Endothelial cell of umbilical vein (primary cell): ENCODE measurements at regions of chr2 and their contacts with region 1.

Region 1: GRCh38 chr2:25342372-25343186 is 854 bp upstream of the DNMT3A start:
- DNase-seq: peak; percentile 88
- H3K4me3 ChIP-seq: peak overlapping the region in 2 of 3 experiments; percentile 29 to 58
- H3K27ac ChIP-seq: no peak overlapping the region
- H3K4me1 ChIP-seq: no peaks in the 10 kb centered on the region
- H3K27me3 ChIP-seq: peaks cover 0 to 5% of the 10 kb centered on the region in 2 experiments
- CTCF ChIP-seq: peak; percentile 93 to 95
- POLR2A ChIP-seq: no peak

Region 2: GRCh38 chr2:24084386-24085361 is 1257.9 kb before region 1 on chr2 and contains the start of gene TP53I3:
- CTCF ChIA-PET with region 1: no interaction called
- POLR2A ChIA-PET with region 1: no interaction called
- dilution Hi-C with region 1: no loop called
- intact Hi-C with region 1: no loop called
- DNase-seq: peak; percentile 93
- H3K4me3 ChIP-seq: peak within 1 kb of the TSS; percentile 53 to 85 (median 73)
- H3K27ac ChIP-seq: peak within 1 kb of the TSS; percentile 66
- H3K4me1 ChIP-seq: peaks cover 16% of the 10 kb centered on the region
- H3K27me3 ChIP-seq: no peaks in the 10 kb centered on the region
- CTCF ChIP-seq: peak; percentile 92 to 99
- POLR2A ChIP-seq: peak; percentile 96
- total RNA-seq, gene TP53I3: 94.2 and 102 TPM in 2 replicates

Region 3: DNA sequence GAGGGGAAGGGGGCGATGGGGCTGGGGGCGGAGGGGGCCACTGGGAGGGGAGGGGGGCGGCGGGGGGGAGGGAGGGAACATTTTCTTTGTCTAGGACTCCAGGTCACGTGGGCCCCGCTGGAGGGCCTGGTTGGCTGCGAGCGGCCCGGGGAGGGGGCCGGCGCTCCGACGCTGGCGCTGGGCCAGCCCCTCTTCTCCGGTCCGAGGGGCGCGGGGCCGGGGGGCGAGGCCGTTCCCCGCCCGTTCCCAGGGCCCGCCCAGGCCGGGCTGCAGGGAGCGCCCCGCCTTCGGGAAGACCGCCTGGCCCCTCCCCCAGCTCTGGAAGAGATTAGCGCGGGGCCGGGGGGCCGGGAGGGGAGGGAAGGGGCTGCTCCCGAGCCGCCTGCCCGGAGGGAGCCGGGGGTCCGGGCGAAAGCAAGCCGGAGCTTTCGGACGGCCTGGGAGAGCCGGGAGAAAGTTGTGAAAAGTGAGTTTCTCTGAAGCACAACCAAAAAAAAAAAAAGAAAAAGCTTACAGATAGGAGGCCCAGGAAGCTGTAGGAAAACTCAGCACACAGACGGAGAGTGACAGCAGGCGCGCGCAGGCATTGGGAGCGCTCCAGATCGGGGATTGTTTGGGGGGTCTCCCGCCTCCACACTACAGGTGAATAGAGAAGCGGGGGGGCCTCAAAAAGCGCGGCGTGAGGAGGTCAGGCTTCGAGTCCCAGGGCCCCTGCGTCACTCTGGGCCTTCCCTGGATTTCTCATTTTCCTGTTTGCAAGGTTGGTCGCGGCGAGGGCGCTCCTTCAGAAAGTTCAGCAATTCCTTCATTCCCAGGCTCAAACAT is 90.1 kb before region 1 on chr2:
- CTCF ChIA-PET with region 1: no interaction called
- POLR2A ChIA-PET with region 1: no interaction called
- dilution Hi-C with region 1: no loop called
- intact Hi-C with region 1: loop called (anchors 1 kb)
- DNase-seq: peak; percentile 82
- H3K4me3 ChIP-seq: peak overlapping the region in 2 of 3 experiments; percentile 19 to 59
- H3K27ac ChIP-seq: peak overlapping the region; percentile 74
- H3K4me1 ChIP-seq: peaks cover 21% of the 10 kb centered on the region
- H3K27me3 ChIP-seq: no peaks in the 10 kb centered on the region
- CTCF ChIP-seq: no peak
- POLR2A ChIP-seq: no peak

Region 4: DNA sequence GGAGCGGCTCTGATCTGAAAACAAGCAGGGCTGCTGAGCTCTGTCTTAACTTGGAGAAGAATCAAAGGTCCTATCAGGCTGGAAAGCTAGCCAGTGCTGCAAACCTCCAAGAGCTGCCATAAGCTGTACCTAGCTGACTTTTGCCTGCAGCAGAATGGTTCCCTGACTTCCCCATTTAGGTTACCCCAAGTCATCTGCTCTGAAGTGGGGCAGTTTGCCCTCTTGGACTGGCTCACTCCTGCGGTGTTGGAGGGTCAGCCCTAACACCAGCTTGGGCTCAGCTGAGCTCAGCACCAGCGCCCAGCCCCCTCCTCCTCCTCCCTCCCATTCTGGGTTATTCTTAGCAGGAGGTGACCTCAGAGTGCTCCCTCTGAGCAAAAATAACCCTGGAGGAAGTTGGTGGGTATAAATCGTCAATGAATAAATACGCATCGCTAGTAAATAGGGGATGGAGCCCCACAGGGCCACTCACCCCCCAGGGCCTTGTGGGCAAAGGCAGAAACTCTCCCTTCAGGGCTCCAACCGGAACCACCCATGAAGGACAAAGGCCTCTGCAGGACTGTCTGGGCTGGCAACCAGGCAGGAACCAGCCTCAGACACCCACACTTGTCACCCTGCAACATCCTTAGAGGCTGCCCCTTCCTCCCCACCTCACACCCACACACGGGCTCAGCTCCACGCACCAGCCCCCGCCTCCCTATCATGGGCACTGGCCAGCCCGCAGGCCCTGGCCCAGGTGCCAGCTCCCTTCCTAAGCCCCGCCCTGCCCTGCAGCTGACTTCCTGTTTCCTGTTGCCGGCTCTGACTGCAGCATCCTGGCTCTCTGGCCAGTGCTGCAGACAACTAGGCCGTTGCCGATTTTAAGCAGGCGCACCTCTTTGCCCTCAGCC is 47.8 kb before region 1 on chr2:
- CTCF ChIA-PET with region 1: interaction called, 3 read pairs
- POLR2A ChIA-PET with region 1: no interaction called
- dilution Hi-C with region 1: no loop called
- intact Hi-C with region 1: loop called (anchors 5 kb)
- DNase-seq: peak; percentile 81
- H3K4me3 ChIP-seq: no peak overlapping the region
- H3K27ac ChIP-seq: peak overlapping the region; percentile 68
- H3K4me1 ChIP-seq: peaks cover 38% of the 10 kb centered on the region
- H3K27me3 ChIP-seq: no peaks in the 10 kb centered on the region
- CTCF ChIP-seq: no peak
- POLR2A ChIP-seq: peak; percentile 76

Region 5: GRCh38 chr2:25362049-25362433 is 19.5 kb after region 1 on chr2:
- CTCF ChIA-PET with region 1: interaction called, 55 read pairs
- POLR2A ChIA-PET with region 1: no interaction called
- dilution Hi-C with region 1: no loop called
- intact Hi-C with region 1: no loop called
- DNase-seq: peak; percentile 93
- H3K4me3 ChIP-seq: peak overlapping the region in 1 of 3 experiments; percentile 34
- H3K27ac ChIP-seq: no peak overlapping the region
- H3K4me1 ChIP-seq: peaks cover 4% of the 10 kb centered on the region
- H3K27me3 ChIP-seq: no peaks in the 10 kb centered on the region
- CTCF ChIP-seq: peak; percentile 96 to 97
- POLR2A ChIP-seq: peak; percentile 68

Region 6: DNA sequence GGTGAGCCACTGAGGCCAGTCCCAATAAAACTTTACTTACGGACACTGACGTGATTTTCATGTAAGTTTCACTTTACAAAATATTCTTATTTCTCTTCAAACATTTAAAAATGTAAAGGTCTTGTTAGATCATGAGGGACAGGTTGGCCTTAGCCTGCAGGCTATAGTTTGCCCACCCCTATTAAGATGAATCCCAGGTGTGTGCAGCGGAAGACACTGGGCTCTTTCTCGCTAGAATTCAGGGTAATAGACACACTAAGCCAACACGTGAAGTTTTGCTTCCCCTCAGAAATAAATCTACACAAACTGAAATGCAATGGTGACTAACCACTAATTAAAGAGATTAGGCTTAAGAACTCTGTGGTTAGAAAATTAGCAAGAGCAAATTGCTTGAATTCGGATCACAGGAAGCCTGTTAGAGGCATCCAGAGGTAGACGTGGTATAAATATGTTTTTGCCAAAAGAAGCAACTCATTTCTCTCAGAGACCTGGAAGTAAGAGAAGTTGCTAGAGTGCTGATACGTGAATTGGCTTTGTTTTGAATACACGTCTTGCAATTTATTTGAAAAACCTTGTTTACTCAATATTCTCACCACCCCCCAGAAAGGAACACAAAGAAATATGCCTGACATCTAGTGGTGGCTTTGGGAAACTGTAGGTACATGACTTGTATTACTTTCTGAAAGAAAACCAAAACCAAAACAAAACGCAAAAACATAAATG is 179.2 kb after region 1 on chr2:
- CTCF ChIA-PET with region 1: no interaction called
- POLR2A ChIA-PET with region 1: no interaction called
- dilution Hi-C with region 1: no loop called
- intact Hi-C with region 1: loop called (anchors 1 kb)
- DNase-seq: peak; percentile 86
- H3K4me3 ChIP-seq: no peak overlapping the region
- H3K27ac ChIP-seq: no peak overlapping the region
- H3K4me1 ChIP-seq: peaks cover 7% of the 10 kb centered on the region
- H3K27me3 ChIP-seq: no peaks in the 10 kb centered on the region
- CTCF ChIP-seq: peak; percentile 55 to 61
- POLR2A ChIP-seq: no peak

Region 7: DNA sequence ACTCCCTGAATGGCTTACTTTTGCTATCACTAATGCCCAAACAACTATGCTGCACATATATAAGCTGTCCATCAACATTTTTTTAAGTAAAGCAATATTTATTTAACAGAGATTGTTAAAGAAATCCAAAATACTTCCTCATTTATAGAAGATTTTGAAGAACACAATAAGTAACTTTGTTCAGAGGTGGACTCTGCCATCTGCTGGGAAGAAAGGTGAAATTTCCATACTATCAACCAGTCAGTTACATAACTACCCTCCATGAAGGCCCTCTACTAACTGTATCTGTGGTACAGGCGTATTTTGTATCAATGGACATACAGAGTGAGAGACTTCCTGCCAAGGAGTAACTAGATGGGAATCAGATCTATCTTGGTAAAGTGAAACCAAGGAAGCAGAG is 224.8 kb after region 1 on chr2:
- CTCF ChIA-PET with region 1: no interaction called
- POLR2A ChIA-PET with region 1: no interaction called
- dilution Hi-C with region 1: no loop called
- intact Hi-C with region 1: loop called (anchors 2 kb)
- DNase-seq: peak; percentile 67
- H3K4me3 ChIP-seq: no peak overlapping the region
- H3K27ac ChIP-seq: no peak overlapping the region
- H3K4me1 ChIP-seq: peaks cover 19% of the 10 kb centered on the region
- H3K27me3 ChIP-seq: no peaks in the 10 kb centered on the region
- CTCF ChIP-seq: peak; percentile 18 to 31
- POLR2A ChIP-seq: no peak